ENCODE measurements at regions of chr6 and their contacts with region 1.

Region 1: DNA sequence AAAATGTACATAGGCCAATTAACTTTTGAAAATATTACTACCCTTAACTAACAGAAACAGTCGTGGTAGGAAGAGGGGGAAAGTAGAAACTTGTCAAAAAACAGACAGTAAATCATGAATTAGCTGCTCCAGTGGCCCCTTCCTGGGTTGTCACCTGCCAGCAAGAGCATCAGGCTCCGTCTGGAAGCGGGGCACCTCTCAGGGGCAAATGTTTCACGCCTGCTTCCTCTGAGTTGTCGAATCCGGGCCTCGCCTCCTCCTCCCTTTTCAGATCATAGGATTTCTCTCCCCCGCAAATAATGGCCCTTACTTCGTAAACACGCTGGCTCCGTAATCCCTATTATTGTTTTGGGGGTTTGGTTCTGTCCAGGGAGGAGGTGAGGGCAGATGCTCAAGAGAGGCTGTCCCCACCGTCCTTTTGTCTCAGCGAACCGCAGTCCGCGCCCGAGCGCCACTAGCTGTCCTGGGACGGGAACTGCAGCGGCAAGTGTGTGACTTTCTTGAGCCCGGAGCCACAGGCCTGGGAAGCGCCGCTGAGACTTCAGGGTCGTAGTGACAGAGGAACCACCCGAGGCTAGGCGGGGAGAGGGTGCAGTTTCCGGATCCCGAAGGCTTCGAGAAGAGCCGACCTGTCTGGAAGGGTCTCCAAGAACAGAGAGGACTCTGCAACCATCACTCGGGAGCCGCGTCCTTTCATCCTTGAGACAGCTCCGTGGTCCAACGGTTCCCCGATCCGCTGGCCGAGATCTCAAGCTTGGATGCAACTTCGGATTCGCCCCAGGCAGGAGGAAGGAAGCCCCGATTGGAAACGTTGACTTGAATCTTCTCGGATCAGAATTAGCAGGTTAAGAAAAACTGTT is 214.5 kb upstream of the ZNF184 start:
- DNase-seq: peak; percentile 79
- ATAC-seq: peak; percentile 70
- H3K4me3 ChIP-seq: peak overlapping the region; percentile 54 to 56
- H3K27ac ChIP-seq: peak overlapping the region; percentile 54
- H3K4me1 ChIP-seq: peaks cover 15 to 31% of the 10 kb centered on the region in 2 experiments
- H3K27me3 ChIP-seq: no peaks in the 10 kb centered on the region
- CTCF ChIP-seq: peak; percentile 55 to 81 (median 79); a peak in 5 of 6 replicates
- POLR2A ChIP-seq: no peak
- RAD21 ChIP-seq: peak; percentile 76

Region 2: DNA sequence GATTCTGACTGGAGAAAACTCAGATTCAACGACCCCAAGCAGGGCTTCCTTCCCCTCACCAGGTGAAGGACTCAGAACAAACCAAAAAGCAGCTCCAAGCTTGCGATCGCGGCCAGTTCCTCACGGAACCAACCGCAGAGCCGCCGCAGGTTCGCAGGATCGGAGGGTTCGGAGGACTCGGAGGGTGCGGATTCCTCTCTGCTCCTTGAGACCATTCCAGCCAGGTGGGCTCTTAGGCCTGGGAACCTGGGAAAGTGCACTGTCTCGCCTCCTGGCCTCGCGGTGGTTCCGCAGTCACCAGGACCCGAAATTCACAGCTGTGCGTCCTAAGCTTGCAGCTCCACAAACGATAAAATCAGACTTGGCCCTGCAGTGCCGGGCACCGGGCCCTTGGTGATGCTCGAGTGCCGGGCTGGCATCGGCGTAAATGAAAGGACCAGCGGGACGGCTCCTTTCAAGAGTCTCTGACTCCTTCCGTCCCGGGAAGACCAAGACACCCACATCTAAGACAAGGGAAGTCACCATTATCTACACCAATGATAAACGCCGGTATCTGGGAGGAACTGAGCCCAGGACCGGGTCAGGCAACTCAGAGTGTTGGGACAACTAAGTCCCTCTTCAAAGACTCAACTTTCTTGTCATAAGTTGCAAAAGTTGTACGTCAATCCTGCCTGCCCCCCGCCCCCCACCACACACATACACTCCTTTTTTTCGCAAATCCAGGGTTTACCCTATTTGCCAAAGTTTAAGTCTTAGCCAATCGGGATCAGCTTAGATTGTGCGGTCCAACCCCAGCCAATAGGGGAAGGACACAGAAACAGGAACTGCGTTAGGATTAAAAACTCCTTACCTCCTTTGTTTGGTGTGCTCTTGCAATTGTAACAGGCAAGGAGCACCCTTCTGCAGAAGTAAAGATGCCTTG is 509.6 kb before region 1 on chr6:
- CTCF ChIA-PET with region 1: no interaction called
- POLR2A ChIA-PET with region 1: no interaction called
- RAD21 ChIA-PET with region 1: no interaction called
- intact Hi-C with region 1: loop called (anchors 5 kb)
- DNase-seq: peak; percentile 87
- ATAC-seq: peak; percentile 86
- H3K4me3 ChIP-seq: peak overlapping the region; percentile 57 to 65
- H3K27ac ChIP-seq: peak overlapping the region; percentile 48
- H3K4me1 ChIP-seq: peaks cover 4 to 17% of the 10 kb centered on the region in 2 experiments; a peak in 3 of 4 replicates
- H3K27me3 ChIP-seq: no peaks in the 10 kb centered on the region
- CTCF ChIP-seq: peak; percentile 22 to 64 (median 61); a peak in 5 of 6 replicates
- POLR2A ChIP-seq: no peak
- RAD21 ChIP-seq: peak; percentile 69

Region 3: GRCh38 chr6:27237089-27237803 is 450.1 kb before region 1 on chr6:
- CTCF ChIA-PET with region 1: no interaction called
- POLR2A ChIA-PET with region 1: no interaction called
- RAD21 ChIA-PET with region 1: no interaction called
- intact Hi-C with region 1: loop called (anchors 5 kb)
- DNase-seq: peak; percentile 67
- ATAC-seq: peak; percentile 86
- H3K4me3 ChIP-seq: no peak overlapping the region
- H3K27ac ChIP-seq: peak overlapping the region; percentile 6; the same call in 1 of the 2 replicates
- H3K4me1 ChIP-seq: peaks cover 8 to 23% of the 10 kb centered on the region in 2 experiments; a peak in 3 of 4 replicates
- H3K27me3 ChIP-seq: no peaks in the 10 kb centered on the region
- CTCF ChIP-seq: no peak
- POLR2A ChIP-seq: no peak
- RAD21 ChIP-seq: no peak

Region 4: DNA sequence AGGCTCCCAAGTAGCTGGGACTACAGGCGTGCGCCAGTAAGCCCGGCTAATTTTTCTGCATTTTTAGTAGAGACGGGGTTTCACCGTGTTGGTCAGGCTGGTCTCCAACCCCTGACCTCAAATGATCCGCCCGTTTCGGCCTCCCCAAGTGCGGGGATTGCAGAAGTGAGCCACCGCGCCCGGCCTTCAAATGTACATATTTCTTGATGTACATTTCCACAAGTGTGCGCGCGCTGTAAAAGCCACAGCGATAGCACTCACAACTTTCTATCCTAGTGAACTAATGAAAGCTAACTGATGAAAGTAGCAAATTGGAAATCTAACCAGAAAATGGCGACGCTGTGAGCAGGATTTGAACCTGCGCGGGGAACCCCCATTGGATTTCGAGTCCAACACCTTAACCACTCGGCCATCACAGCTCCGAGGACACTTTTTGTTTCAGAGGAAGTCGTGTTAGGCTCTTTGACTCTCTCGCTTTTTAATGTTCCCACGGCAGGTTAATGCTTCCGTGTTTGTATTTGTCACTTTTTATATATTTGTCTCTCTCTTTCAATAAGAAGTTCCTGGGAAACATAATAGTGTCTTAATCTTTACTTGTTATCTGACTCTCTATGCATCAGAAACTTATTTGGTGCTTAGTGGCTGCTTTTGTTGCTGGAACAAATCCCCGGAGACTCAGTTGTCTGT is 15.1 kb before region 1 on chr6:
- CTCF ChIA-PET with region 1: interaction called, 5 read pairs
- POLR2A ChIA-PET with region 1: interaction called, 3 read pairs
- RAD21 ChIA-PET with region 1: no interaction called
- intact Hi-C with region 1: loop called (anchors 1 kb)
- DNase-seq: peak; percentile 90
- ATAC-seq: peak; percentile 76
- H3K4me3 ChIP-seq: peak overlapping the region; percentile 17 to 51
- H3K27ac ChIP-seq: peak overlapping the region; percentile 67
- H3K4me1 ChIP-seq: peaks cover 17 to 42% of the 10 kb centered on the region in 2 experiments; a peak in 3 of 4 replicates
- H3K27me3 ChIP-seq: no peaks in the 10 kb centered on the region
- CTCF ChIP-seq: no peak
- POLR2A ChIP-seq: no peak
- RAD21 ChIP-seq: no peak; the same call in 1 of the 2 replicates

Measured in HCT116 (cell line).